ENCODE measurements at regions of chr22 and their contacts with region 1.

Region 1: DNA sequence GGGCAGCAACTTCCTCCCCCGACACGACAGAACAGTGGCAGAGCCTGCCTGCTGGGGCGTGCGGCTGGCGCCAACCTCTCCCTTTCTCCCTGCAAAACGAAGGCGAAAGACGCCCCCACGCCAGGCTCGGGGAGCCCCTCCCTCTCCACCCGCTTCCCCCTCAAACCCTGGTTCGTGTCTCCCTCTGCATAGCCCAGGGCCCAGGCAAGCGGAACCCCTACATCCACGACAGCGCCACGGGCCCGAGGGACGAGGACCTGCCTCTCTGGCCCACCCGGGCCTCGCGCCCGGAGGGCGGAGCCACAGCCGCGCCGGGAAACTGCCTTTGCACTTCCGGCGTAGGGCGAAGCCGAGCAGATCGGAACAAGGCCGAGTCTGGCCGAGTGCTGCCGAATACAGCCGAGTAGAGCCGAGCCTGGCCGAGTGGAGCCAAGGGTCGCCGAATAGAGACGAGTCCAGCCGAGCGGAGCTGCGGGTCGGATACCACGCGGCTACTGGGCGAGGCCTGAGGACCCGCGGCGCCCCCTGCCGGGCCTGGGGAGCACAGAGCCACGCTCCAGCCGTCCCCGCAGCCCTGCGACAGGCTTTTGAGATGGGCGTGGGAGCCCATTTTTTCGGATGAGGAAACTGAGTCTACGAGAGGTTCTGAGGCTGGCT is 11.2 kb upstream of the C1QTNF6 start:
- DNase-seq: peak; percentile 97 to 100 (median 100)
- H3K4me3 ChIP-seq: peak overlapping the region in 3 of 4 donors; percentile 2 to 60 (median 56)
- H3K27ac ChIP-seq: peak overlapping the region; percentile 95 to 97 (median 95)
- H3K4me1 ChIP-seq: peaks cover 25 to 38% of the 10 kb centered on the region in 2 donors
- H3K27me3 ChIP-seq: no peaks in the 10 kb centered on the region
- CTCF ChIP-seq: peak; percentile 85 to 97 (median 92)
- POLR2A ChIP-seq: peak; percentile 96 to 97

Region 2: DNA sequence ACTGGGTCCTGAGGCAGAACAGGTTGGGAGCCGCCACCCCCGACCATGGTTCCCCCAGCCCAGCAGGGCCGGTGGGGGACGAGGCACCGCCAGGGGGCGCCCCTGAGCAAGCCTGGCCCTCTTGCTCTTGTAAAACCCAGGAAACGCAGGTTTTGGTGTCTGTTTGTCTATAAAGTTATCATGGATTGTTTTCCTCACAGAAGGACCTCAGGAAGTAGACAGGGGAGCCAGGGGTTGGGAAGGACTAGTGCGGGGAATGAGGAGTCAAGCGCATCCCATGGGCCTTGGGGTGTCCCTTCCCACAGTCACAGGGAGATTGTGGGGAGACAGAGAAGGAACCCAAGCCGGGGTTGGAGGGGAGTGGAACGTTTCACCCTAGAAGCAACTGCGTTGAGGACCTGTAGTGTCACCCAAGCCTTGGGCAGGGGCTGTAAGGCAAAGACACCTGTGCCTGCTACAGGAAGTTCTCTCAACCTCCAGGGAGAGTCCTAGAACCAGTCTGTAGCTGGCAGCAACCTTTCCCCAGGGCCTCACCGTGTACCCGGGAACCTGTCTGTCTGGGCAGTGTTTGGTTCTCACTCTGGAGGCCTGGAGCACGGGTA is 121.2 kb before region 1 on chr22:
- intact Hi-C with region 1: loop called (anchors 2 to 5 kb)
- DNase-seq: peak; percentile 58 to 78 (median 72)
- H3K4me3 ChIP-seq: no peak overlapping the region
- H3K27ac ChIP-seq: no peak overlapping the region
- H3K4me1 ChIP-seq: no peaks in the 10 kb centered on the region
- H3K27me3 ChIP-seq: no peaks in the 10 kb centered on the region
- CTCF ChIP-seq: peak; percentile 81 to 99 (median 88)
- POLR2A ChIP-seq: no peak

Region 3: GRCh38 chr22:37166675-37167066 is 32.6 kb before region 1 on chr22:
- intact Hi-C with region 1: loop called (anchors 2 kb)
- DNase-seq: peak; percentile 86 to 95 (median 92)
- H3K4me3 ChIP-seq: peak overlapping the region in 1 of 4 donors; percentile 35
- H3K27ac ChIP-seq: peak overlapping the region in 2 of 5 donors; percentile 17 to 64
- H3K4me1 ChIP-seq: peaks cover 13 to 19% of the 10 kb centered on the region in 2 donors
- H3K27me3 ChIP-seq: no peaks in the 10 kb centered on the region
- CTCF ChIP-seq: peak; percentile 92 to 96 (median 94)
- POLR2A ChIP-seq: no peak

Region 4: GRCh38 chr22:37401401-37402183 is 202.4 kb after region 1 on chr22:
- intact Hi-C with region 1: no loop called
- DNase-seq: no peak
- H3K4me3 ChIP-seq: no peak overlapping the region
- H3K27ac ChIP-seq: no peak overlapping the region
- H3K4me1 ChIP-seq: no peaks in the 10 kb centered on the region
- H3K27me3 ChIP-seq: no peaks in the 10 kb centered on the region
- CTCF ChIP-seq: no peak
- POLR2A ChIP-seq: no peak